ENCODE measurements at regions of chr5 and their contacts with region 1.

Region 1: DNA sequence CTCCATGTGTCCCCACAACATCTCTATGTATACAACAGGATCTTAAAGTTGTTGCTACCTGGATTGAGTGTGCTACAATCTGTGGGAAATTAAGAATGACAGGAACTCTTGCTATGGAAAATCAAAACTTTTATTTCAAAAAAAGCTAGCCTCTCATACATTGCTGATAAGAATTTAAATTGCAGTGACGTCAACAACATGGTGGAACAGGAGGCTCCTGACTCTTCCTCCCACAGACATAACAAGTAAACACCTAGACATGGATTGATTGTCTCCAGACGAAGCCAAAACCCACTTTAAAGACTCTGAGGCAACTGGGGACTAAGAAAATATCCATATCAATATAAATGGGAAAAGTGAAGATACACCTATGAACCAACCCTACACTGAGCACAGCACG is 749.5 kb downstream of the SEMA5A start:
- DNase-seq: no peak
- H3K4me3 ChIP-seq: no peak overlapping the region
- H3K27ac ChIP-seq: no peak overlapping the region
- H3K4me1 ChIP-seq: no peaks in the 10 kb centered on the region
- H3K27me3 ChIP-seq: no peaks in the 10 kb centered on the region
- CTCF ChIP-seq: no peak
- POLR2A ChIP-seq: no peak

Region 2: GRCh38 chr5:7960142-7960541 is 836.2 kb before region 1 on chr5:
- intact Hi-C with region 1: no loop called
- DNase-seq: no peak
- H3K4me3 ChIP-seq: no peak overlapping the region
- H3K27ac ChIP-seq: no peak overlapping the region
- H3K4me1 ChIP-seq: no peaks in the 10 kb centered on the region
- H3K27me3 ChIP-seq: no peaks in the 10 kb centered on the region
- CTCF ChIP-seq: no peak
- POLR2A ChIP-seq: no peak

Region 3: DNA sequence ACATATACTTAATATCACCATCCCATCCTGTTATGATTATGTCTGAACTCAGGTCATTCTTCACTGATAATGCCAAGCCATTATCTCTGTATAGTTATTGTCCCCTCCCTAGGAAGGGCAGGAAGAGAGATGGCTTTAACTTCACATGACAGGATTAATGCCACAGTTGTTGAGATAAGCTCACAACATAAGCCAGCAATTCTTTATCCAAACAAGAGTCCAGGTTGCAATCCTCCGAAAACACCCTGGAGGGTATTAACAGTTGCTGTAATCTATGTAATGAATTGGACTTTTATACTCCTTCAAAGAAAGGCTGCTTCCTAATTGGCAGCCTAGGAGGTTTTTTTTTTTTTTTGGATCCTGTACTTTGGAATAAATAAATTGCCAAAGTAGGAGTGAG is 29.9 kb before region 1 on chr5:
- intact Hi-C with region 1: loop called (anchors 2 kb)
- DNase-seq: no peak
- H3K4me3 ChIP-seq: no peak overlapping the region
- H3K27ac ChIP-seq: no peak overlapping the region
- H3K4me1 ChIP-seq: no peaks in the 10 kb centered on the region
- H3K27me3 ChIP-seq: no peaks in the 10 kb centered on the region
- CTCF ChIP-seq: no peak
- POLR2A ChIP-seq: no peak